B cell (primary cell): ENCODE measurements at regions of chr1 and their contacts with region 1.

Region 1: DNA sequence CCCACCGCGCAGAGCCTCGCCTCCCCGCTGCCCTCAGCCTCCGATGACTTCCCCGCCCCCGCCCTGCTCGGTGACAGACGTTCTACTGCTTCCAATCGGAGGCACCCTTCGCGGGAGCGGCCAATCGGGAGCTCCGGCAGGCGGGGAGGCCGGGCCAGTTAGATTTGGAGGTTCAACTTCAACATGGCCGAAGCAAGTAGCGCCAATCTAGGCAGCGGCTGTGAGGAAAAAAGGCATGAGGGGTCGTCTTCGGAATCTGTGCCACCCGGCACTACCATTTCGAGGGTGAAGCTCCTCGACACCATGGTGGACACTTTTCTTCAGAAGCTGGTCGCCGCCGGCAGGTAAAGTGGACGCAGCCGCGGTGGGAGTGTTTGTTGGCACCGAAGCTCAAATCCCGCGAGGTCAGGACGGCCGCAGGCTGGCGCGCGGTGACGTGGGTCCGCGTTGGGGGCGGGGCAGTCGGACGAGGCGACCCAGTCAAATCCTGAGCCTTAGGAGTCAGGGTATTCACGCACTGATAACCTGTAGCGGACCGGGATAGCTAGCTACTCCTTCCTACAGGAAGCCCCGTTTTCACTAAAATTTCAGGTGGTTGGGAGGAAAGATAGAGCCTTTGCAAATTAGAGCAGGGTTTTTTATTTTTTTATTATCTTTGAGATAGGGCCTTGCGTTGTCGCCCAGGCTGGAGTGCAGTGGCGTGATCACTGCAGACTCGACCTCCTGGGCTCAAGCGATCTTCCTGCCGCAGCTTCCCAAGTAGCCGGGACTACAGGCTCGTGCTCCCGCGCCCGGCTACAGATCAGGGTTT is at the start of gene PMF1:
- DNase-seq: peak; percentile 97
- ATAC-seq: peak; percentile 97
- H3K4me3 ChIP-seq: peak within 1 kb of the TSS; percentile 75 to 95 (median 81)
- H3K4me3 Mint-ChIP-seq: peak within 1 kb of the TSS; percentile 98
- H3K27ac ChIP-seq: peak within 1 kb of the TSS; percentile 93 to 94
- H3K27ac Mint-ChIP-seq: peak within 1 kb of the TSS; percentile 99
- H3K4me1 ChIP-seq: peaks cover 14 to 19% of the 10 kb centered on the region in 2 donors
- H3K4me1 Mint-ChIP-seq: peaks cover 29% of the 10 kb centered on the region
- H3K27me3 ChIP-seq: no peaks in the 10 kb centered on the region
- H3K27me3 Mint-ChIP-seq: no peaks in the 10 kb centered on the region
- CTCF ChIP-seq: no peak
- total RNA-seq, gene PMF1: 58.3 and 64.3 TPM in 2 replicates

Region 2: DNA sequence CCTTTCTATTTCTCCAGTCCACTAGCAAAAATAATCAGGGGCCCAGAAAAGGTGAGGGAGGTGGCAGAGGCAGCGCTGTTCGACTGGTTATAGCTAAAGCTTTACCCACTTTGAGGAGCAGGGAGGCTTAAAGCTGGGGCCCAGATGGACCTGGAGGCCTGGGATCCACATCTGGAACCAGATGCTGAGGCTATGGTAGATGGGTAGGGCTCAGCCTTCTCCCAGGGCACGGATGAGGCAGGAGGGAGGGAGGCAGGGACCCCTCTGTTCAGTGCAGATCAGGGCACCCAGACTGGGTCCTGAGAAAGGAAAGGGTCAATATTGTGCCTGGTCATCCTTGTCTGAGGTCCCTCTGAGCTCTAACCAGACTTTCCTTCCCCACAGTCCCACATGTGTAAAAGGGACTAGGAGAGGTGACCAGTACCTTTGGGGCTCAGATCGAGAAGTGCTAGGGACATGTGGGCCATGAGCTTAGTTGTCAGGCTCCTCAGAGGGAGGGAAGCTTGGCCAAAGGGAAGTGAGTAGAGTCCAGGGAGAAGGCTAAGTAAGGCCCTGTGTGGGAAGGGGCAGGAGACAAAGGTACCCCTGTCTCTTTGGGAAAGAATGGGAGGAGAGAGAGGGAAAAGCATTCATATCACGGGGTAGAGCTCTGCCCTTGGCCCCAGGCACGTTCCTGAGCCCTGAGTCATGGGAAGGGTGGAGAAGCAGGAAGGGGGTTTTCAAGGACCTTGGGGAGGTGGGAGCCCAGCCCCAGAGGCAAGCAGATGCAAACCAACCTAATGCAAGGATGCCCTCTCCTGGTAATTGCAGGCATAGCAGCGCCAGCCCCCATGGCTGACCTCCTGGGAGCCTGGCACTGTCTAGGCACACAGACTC is 83.1 kb before region 1 on chr1:
- CTCF ChIA-PET with region 1: interaction called, 10 read pairs
- POLR2A ChIA-PET with region 1: no interaction called
- intact Hi-C with region 1: no loop called
- DNase-seq: peak; percentile 84
- ATAC-seq: peak; percentile 69
- H3K4me3 ChIP-seq: no peak overlapping the region
- H3K4me3 Mint-ChIP-seq: no peak overlapping the region
- H3K27ac ChIP-seq: no peak overlapping the region
- H3K27ac Mint-ChIP-seq: peak overlapping the region; percentile 26
- H3K4me1 ChIP-seq: peaks cover 14 to 21% of the 10 kb centered on the region in 2 donors
- H3K4me1 Mint-ChIP-seq: peaks cover 28% of the 10 kb centered on the region
- H3K27me3 ChIP-seq: peaks cover 0 to 4% (median 1%) of the 10 kb centered on the region in 4 experiments
- H3K27me3 Mint-ChIP-seq: peaks cover 2% of the 10 kb centered on the region
- CTCF ChIP-seq: peak; percentile 95

Region 3: GRCh38 chr1:156154317-156154749 is 58.7 kb before region 1 on chr1:
- CTCF ChIA-PET with region 1: interaction called, 381 read pairs
- POLR2A ChIA-PET with region 1: interaction called, 8 read pairs
- intact Hi-C with region 1: loop called (anchors 2 kb)
- DNase-seq: peak; percentile 92
- ATAC-seq: peak; percentile 96
- H3K4me3 ChIP-seq: peak overlapping the region; percentile 38 to 71 (median 54)
- H3K4me3 Mint-ChIP-seq: peak overlapping the region; percentile 80
- H3K27ac ChIP-seq: peak overlapping the region; percentile 74 to 90
- H3K27ac Mint-ChIP-seq: peak overlapping the region; percentile 91
- H3K4me1 ChIP-seq: peaks cover 89 to 100% of the 10 kb centered on the region in 2 donors
- H3K4me1 Mint-ChIP-seq: peaks cover 94% of the 10 kb centered on the region
- H3K27me3 ChIP-seq: peaks cover 0 to 13% (median 4%) of the 10 kb centered on the region in 4 experiments
- H3K27me3 Mint-ChIP-seq: peaks cover 26% of the 10 kb centered on the region
- CTCF ChIP-seq: no peak

Region 4: GRCh38 chr1:156282479-156283222 is 69.6 kb after region 1 on chr1 and contains the start of gene SMG5:
- CTCF ChIA-PET with region 1: interaction called, 4 read pairs
- POLR2A ChIA-PET with region 1: interaction called, 9 read pairs
- intact Hi-C with region 1: loop called (anchors 1 kb)
- DNase-seq: peak; percentile 98
- ATAC-seq: peak; percentile 93
- H3K4me3 ChIP-seq: peak within 1 kb of the TSS; percentile 74 to 99 (median 86)
- H3K4me3 Mint-ChIP-seq: peak within 1 kb of the TSS; percentile 98
- H3K27ac ChIP-seq: peak within 1 kb of the TSS; percentile 79 to 89
- H3K27ac Mint-ChIP-seq: peak within 1 kb of the TSS; percentile 98
- H3K4me1 ChIP-seq: peaks cover 20 to 28% of the 10 kb centered on the region in 2 donors
- H3K4me1 Mint-ChIP-seq: peaks cover 39% of the 10 kb centered on the region
- H3K27me3 ChIP-seq: no peaks in the 10 kb centered on the region
- H3K27me3 Mint-ChIP-seq: no peaks in the 10 kb centered on the region
- CTCF ChIP-seq: no peak
- total RNA-seq, gene SMG5: 74.0 and 77.0 TPM in 2 replicates